Activated T-helper 1 cell treated with anti-CD3 and anti-CD28 coated beads, Interleukin-12 subunit alpha, Interleukin-12 subunit beta, Interleukin-2, Interleukin-4 antibody, amounts not matched to agents 30 ng/mL and 10 ng/mL and 1 ng/mL, durations not matched to agents 14 hours and 24 hours and 36 hours (primary cell): ENCODE measurements at regions of chr2 and their contacts with region 1.

Region 1: DNA sequence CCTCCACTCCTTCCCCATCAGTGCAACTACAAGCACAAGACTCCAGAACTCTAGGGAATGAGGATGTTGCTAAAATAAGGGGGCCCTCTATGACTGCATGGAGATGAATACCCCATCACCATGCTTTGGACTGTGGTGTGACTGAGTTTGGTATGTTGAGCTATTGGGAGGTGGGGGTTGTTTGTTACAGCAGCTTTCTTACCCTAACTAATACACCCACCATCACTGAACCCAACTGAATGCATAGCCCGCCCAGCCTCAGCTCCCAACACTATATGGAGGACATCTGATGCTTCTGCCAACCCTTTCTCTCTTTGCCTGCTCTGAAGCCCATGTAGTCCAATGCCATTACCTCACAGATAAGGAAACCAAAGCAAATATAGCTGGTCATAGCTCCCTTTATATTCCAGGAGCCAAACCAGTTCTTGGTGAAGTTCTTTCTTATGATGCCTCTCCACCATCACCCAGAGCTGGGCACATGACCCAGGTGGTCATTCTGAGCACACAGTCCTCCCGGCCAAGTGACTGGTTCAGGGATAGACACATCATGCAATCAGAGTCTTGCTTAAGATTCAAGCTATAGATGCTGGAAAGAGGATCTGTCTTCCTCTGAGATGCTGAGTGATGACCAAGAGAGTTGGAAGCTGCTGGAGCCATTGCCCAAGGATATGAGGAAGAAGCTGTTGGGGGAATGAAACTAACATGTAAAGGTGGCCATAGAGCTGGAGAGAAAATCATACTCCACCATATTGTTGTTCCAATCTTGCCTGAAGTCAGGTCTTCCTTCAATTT is 155.6 kb upstream of the HAAO start:
- DNase-seq: no peak
- H3K4me3 Mint-ChIP-seq: no peak overlapping the region
- H3K27ac Mint-ChIP-seq: no peak overlapping the region
- H3K4me1 Mint-ChIP-seq: peaks cover 7% of the 10 kb centered on the region
- H3K27me3 Mint-ChIP-seq: peaks cover 15% of the 10 kb centered on the region

Region 2: DNA sequence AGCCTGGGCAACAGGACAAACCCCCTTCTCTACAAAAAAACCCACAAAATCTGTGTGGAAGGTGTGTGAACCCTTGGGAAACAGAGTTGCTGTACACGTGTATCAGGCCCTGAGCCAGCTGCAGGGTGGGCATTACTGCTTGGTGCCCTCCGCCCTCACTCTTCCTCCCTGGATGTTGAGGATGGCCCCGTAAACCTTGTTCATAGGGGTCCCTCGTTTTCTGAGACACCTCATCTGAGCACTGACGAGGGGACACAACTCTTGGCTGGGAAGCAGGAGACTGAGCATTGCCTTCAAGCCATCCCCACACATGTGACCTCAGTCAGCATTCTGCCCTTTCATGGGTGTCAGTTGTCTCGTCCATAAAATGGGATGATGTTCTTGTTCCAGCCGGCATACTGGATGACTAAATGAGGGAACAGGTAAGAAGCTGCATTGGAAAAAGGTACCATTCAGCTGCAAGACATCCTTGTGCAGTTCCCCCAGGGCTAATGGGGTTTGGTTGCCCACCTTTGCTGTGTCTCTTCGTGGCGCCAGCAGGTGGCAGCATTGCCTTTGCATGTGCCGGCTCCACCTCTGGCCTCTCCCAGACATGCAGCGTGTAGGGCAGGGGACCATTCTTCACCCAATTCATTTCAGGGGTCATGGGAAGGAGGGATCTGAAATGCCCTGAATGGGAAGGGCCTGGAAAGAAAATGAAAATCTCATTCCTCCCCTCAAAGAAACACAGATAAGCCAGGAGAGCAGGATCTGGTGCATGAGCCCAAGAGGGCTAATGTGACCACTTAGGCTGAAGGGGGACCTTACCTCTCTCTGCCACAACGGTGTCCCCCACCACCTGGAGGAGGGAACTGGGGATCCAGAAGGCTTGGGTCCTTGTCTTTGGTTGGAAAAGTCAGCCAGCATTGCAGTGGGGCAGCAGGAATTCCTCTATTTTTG is 119.2 kb before region 1 on chr2:
- intact Hi-C with region 1: loop called (anchors 2 kb)
- DNase-seq: peak; percentile 52
- H3K4me3 Mint-ChIP-seq: no peak overlapping the region
- H3K27ac Mint-ChIP-seq: no peak overlapping the region
- H3K4me1 Mint-ChIP-seq: peaks cover 16% of the 10 kb centered on the region
- H3K27me3 Mint-ChIP-seq: peaks cover 14% of the 10 kb centered on the region

Region 3: DNA sequence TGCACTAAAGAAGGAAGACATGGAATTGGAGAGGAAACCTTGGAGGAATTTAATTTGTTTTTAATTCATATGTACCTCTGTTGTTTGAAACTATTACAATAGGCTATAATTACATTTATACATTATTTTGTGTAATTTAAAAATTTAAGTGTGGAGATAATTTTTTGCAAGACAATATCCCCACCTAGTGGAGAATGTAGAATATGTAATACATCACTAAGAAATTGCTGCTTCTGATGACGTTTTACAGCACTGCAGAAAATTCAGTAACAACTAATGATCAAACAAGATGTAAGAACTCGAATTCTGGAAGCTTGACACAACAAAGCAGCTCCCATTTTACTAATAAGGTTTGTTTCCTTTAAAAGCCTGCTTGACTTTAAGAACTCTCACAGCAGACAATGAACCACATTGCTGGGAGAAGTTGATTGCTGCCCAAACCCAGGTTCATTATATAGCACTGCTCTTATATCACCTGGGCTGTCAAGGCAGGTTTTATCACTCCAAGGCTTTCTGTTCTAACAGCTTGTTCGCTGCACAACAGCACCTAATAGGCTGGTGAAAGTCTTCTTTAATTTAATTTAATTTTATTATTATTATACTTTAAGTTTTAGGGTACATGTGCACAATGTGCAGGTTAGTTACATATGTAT is 594.4 kb after region 1 on chr2:
- intact Hi-C with region 1: loop called (anchors 1 kb)
- DNase-seq: no peak
- H3K4me3 Mint-ChIP-seq: no peak overlapping the region
- H3K27ac Mint-ChIP-seq: no peak overlapping the region
- H3K4me1 Mint-ChIP-seq: peaks cover 18% of the 10 kb centered on the region
- H3K27me3 Mint-ChIP-seq: no peaks in the 10 kb centered on the region

Region 4: GRCh38 chr2:43576981-43577892 is 629.2 kb after region 1 on chr2:
- intact Hi-C with region 1: loop called (anchors 1 kb)
- DNase-seq: no peak
- H3K4me3 Mint-ChIP-seq: no peak overlapping the region
- H3K27ac Mint-ChIP-seq: no peak overlapping the region
- H3K4me1 Mint-ChIP-seq: peaks cover 27% of the 10 kb centered on the region
- H3K27me3 Mint-ChIP-seq: no peaks in the 10 kb centered on the region

Region 5: DNA sequence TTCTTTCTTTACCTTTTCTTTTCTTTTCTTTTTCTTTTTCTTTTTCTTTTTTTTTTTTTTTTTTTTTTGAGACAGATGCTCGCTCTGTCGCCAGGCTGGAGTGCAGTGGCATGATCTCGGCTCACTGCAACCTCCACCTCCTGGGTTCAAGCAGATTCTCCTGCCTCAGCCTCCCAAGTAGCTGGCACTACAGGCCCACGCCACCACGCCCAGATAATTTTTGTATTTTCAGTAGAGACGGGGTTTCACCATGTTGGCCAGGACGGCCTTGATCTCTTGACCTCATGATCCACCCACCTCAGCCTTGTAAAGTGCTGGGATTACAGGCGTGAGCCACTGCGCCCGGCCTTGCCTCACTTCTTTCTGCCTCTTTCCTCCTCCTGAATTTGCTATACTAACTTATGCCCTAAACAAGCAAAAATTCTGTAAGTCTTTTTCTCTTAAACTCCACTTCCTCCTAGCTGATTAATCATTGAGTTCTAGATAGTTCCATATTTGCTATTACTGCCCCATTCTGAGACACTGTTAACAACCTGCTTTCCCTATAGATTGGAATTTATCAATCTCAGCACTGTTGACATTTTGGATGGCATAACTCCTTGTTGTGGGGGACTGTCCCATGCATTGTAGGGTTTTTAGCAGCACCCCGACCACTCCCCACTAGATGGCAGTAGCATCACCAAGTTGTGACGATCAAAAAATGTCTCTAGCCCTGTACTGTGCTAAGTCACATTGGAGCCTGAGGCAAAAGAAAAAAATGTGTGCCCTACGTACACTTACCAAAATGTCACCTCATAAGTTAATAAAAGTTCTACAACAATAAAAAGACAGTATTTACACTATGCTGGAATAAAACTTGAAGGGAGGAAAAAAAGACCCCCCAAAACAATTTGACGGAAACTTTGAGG is 664.2 kb after region 1 on chr2:
- intact Hi-C with region 1: loop called (anchors 1 kb)
- DNase-seq: peak; percentile 60
- H3K4me3 Mint-ChIP-seq: no peak overlapping the region
- H3K27ac Mint-ChIP-seq: no peak overlapping the region
- H3K4me1 Mint-ChIP-seq: peaks cover 5% of the 10 kb centered on the region
- H3K27me3 Mint-ChIP-seq: peaks cover 9% of the 10 kb centered on the region